Dendritic cell treated with granulocyte-macrophage colony-stimulating factor and Interleukin-4, amounts not matched to agents 40 ng/mL and 50 ng/mL, for 4 days (primary cell): ENCODE measurements at regions of chr2 and their contacts with region 1.

Region 1: DNA sequence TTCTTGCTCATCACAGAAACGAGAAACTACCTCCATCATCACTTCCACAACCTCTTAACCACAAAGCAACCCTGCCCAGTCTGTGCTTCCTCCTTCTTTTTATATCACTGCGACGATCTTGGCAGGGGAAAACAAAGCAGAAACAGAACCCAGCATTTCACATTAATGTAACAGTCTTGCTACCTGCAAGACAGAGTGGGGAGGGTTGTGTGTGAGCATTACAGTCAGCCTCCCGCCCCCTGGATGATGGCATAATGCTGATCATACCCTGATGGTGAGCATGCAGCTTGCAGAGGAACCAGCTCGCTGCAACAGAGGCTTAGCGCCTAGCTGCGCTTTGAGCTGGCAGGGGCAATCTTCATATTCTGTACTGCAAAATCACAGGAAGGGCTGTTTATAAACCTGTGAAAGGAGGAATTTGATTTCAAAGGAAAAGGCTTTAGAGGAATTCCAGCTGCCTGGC is 376.1 kb downstream of the IRS1 start:
- H3K4me3 Mint-ChIP-seq: peak overlapping the region; percentile 53
- H3K27ac Mint-ChIP-seq: peak overlapping the region; percentile 60
- H3K4me1 Mint-ChIP-seq: peaks cover 31% of the 10 kb centered on the region
- H3K27me3 Mint-ChIP-seq: peaks cover 12% of the 10 kb centered on the region

Region 2: DNA sequence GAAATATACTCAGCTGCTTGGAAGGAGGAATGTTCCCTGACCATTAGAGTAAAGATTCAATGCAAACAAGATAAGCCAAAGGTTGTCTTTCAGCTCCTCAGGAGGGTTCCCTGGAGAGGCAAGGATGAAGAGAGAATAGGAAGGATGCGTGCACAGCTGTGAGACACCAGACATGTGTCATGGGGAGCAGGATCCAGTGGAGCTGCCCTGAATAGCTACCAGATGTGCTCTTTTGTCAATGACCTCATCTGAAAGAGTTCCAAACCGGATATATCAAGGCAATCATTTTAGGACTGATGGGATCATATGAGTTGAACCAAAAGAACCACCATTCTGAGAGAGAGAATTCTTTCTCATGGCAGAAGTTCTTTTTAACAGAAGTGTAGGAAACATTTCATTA is 114.5 kb before region 1 on chr2:
- intact Hi-C with region 1: loop called (anchors 10 kb)
- H3K4me3 Mint-ChIP-seq: no peak overlapping the region
- H3K27ac Mint-ChIP-seq: no peak overlapping the region
- H3K4me1 Mint-ChIP-seq: peaks cover 12% of the 10 kb centered on the region
- H3K27me3 Mint-ChIP-seq: no peaks in the 10 kb centered on the region

Region 3: GRCh38 chr2:226378753-226379580 is 44.6 kb before region 1 on chr2:
- intact Hi-C with region 1: no loop called
- H3K4me3 Mint-ChIP-seq: no peak overlapping the region
- H3K27ac Mint-ChIP-seq: no peak overlapping the region
- H3K4me1 Mint-ChIP-seq: no peaks in the 10 kb centered on the region
- H3K27me3 Mint-ChIP-seq: peaks cover 8% of the 10 kb centered on the region

Region 4: DNA sequence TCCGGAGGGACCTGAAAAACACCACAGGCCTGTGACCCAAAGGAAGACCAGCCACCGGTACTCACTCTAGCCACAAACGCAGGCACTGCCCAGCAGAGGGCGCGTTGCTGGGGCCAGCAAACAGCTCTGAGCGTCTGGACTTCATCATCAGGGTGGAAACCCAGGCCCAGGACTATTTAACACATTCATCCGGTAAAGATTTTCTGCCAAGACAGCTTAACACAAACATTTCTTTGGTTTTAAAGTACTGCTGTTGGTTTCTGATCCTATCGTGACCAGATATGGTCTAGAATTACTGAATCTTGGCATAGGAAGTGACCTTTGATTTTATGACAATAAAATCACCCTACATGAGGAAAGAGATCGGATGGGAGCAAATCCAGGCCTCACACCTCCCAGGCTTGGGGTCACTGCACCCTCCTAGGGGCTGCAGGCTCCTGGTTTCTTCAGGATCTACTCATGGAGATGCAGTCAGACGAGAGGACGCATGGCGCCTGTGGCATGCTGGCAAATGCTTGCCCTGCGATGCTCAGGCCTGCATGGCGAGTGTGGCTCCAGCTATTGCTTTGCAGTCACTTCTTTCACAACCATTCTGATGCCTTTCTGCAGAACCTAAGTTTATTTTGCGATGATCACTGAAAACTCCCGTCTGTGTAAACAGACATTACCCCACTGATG is 610.1 kb after region 1 on chr2:
- intact Hi-C with region 1: loop called (anchors 10 kb)
- H3K4me3 Mint-ChIP-seq: no peak overlapping the region
- H3K27ac Mint-ChIP-seq: no peak overlapping the region
- H3K4me1 Mint-ChIP-seq: peaks cover 27% of the 10 kb centered on the region
- H3K27me3 Mint-ChIP-seq: peaks cover 15% of the 10 kb centered on the region